ENCODE measurements at regions of chr12 and their contacts with region 1.

Region 1: GRCh38 chr12:46825591-46826414 is at the start of gene SLC38A4:
- DNase-seq: peak; percentile 51
- H3K4me3 Mint-ChIP-seq: peak within 1 kb of the TSS; percentile 79
- H3K27ac Mint-ChIP-seq: peak within 1 kb of the TSS; percentile 0
- H3K4me1 Mint-ChIP-seq: peaks cover 23% of the 10 kb centered on the region
- H3K27me3 Mint-ChIP-seq: peaks cover 13% of the 10 kb centered on the region
- CTCF ChIP-seq: no peak
- total RNA-seq, gene SLC38A4: 1.5 and 3.1 TPM in 2 replicates

Region 2: GRCh38 chr12:46659032-46659650 is 166.7 kb before region 1 on chr12:
- CTCF ChIA-PET with region 1: no interaction called
- intact Hi-C with region 1: no loop called
- DNase-seq: no peak
- H3K4me3 Mint-ChIP-seq: no peak overlapping the region
- H3K27ac Mint-ChIP-seq: no peak overlapping the region
- H3K4me1 Mint-ChIP-seq: peaks cover 42% of the 10 kb centered on the region
- H3K27me3 Mint-ChIP-seq: no peaks in the 10 kb centered on the region
- CTCF ChIP-seq: no peak

Region 3: GRCh38 chr12:47014474-47014873 is 188.7 kb after region 1 on chr12:
- CTCF ChIA-PET with region 1: no interaction called
- intact Hi-C with region 1: loop called (anchors 10 kb)
- DNase-seq: peak; percentile 8
- H3K4me3 Mint-ChIP-seq: no peak overlapping the region
- H3K27ac Mint-ChIP-seq: peak overlapping the region; percentile 26
- H3K4me1 Mint-ChIP-seq: peaks cover 22% of the 10 kb centered on the region
- H3K27me3 Mint-ChIP-seq: no peaks in the 10 kb centered on the region
- CTCF ChIP-seq: no peak

Measured in Calu3 (cell line).